Posterior cingulate gyrus (tissue), 11 donors: ENCODE measurements at regions of chr7 and their contacts with region 1.

Region 1: GRCh38 chr7:75738987-75739795 is 450 bp upstream of the HIP1 start:
- DNase-seq: peak; percentile 99 to 100 (median 100)

Region 2: GRCh38 chr7:75599244-75599781 is 139.9 kb before region 1 on chr7:
- intact Hi-C with region 1: loop called (anchors 1 kb)
- DNase-seq: peak; percentile 89 to 99 (median 93)